PC-9 (cell line): ENCODE measurements at regions of chr20 and their contacts with region 1.

Region 1: DNA sequence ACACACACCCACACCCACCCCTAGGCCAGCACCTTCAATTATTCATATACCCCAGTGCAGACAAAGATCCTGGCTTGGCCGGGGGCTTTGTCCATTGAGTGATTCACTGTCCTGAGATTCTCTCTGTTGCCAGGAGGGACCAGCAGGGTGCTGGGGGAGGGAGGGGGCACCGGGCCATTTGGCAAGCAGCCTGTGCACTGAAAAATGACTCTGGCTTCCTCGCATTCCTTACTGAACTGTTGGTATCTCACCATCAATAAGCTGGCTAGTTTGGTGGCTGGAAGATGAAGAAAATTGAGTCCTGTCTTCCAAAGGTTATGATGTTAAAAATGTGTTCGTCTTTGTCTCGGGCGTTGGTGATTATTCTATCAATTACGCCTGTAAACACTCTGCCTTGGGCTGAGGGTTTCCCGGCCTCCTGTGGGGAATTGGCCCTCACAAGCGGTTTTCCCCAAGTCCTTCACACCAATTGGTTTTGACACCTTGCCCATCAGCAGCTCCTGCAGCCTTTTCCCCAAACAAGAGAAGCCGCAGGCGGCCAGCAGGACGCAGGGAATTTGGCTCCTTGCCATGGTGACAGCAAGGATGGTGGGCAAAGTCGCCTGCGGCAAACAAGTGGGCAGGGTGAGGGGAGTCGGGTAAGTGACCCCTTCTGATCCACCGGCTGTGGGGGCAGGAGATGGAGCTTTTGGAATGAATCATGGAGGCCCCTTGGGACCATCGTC is 4.9 kb downstream of the VSTM2L start:
- DNase-seq: peak; percentile 75 to 91
- H3K4me3 ChIP-seq: no peak overlapping the region
- H3K27ac ChIP-seq: no peak overlapping the region
- H3K4me1 ChIP-seq: peaks cover 14% of the 10 kb centered on the region; the same call in 1 of the 2 replicates
- H3K27me3 ChIP-seq: peaks cover 45% of the 10 kb centered on the region
- CTCF ChIP-seq: no peak

Region 2: GRCh38 chr20:37932900-37933299 is 25.1 kb after region 1 on chr20:
- CTCF ChIA-PET with region 1: no interaction called
- POLR2A ChIA-PET with region 1: no interaction called
- intact Hi-C with region 1: loop called (anchors 2 kb)
- DNase-seq: peak; percentile 87 to 88
- H3K4me3 ChIP-seq: no peak overlapping the region
- H3K27ac ChIP-seq: no peak overlapping the region
- H3K4me1 ChIP-seq: peaks cover 10% of the 10 kb centered on the region; the same call in 1 of the 2 replicates
- H3K27me3 ChIP-seq: peaks cover 18% of the 10 kb centered on the region
- CTCF ChIP-seq: no peak

Region 3: DNA sequence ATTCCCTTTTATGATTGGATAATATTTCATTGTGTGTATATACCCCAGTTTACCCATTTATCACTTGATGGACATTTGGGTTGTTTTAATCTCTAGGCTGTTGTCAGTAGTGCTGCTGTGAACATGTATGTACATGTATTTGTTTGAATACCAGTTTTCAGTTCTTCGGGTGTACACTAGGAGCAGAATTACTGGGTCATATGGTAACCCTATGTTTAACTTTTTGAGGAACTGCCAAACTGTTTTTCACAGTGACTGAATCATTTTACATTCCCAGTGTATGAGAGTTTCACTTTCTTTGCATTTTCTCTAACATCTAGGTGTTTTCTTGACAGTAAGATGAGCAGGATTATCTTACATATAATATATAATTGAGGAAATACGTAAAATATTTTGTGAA is 628.5 kb after region 1 on chr20:
- CTCF ChIA-PET with region 1: no interaction called
- POLR2A ChIA-PET with region 1: no interaction called
- intact Hi-C with region 1: no loop called
- DNase-seq: no peak
- H3K4me3 ChIP-seq: no peak overlapping the region
- H3K27ac ChIP-seq: no peak overlapping the region
- H3K4me1 ChIP-seq: no peaks in the 10 kb centered on the region
- H3K27me3 ChIP-seq: no peaks in the 10 kb centered on the region
- CTCF ChIP-seq: no peak